Prostate gland (tissue), 2 donors: ENCODE measurements at regions of chr4 and their contacts with region 1.

Region 1: GRCh38 chr4:76515975-76516843 is 81.2 kb downstream of the SHROOM3 start:
- DNase-seq: no peak
- H3K4me3 ChIP-seq: no peak overlapping the region
- H3K27ac ChIP-seq: no peak overlapping the region
- H3K4me1 ChIP-seq: no peaks in the 10 kb centered on the region
- H3K27me3 ChIP-seq: no peaks in the 10 kb centered on the region
- CTCF ChIP-seq: no peak
- POLR2A ChIP-seq: no peak

Region 2: DNA sequence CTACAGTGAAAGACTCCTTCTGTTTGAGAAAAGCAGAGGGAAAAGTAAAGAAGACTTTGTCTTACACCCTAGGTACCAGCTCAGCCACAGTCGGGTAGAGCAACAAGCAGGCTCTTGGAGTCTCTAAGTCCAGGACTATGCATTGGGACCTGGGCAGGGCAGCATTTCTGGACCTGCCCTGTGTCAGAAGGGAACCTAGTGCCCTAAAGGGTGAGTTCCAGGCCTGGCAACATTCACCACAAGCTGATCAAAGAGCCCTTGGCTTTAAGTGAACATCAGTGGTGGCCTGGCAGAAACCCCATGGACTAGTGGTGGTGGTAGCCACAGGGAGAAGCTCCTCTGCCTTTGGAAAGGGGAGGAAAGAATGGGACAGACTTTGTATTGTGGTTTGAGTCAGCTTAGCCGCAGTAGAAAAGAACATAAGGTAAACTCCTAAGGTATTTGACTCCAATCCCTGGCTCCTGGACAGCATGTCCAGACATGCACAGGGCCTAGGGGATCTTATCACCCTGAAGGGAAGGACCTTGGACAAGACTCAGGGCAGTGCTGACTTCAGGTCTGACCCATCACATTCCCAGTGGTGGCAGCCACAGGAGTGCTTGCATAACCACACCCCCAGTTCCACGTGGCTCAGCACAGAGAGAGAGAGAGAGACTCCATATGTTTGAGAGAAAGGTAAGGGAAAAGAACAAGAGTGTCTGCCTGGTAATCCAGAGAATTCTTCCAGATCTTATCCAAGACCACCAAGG is 127.9 kb before region 1 on chr4:
- intact Hi-C with region 1: no loop called
- DNase-seq: no peak
- H3K4me3 ChIP-seq: no peak overlapping the region
- H3K27ac ChIP-seq: no peak overlapping the region
- H3K4me1 ChIP-seq: no peaks in the 10 kb centered on the region
- H3K27me3 ChIP-seq: no peaks in the 10 kb centered on the region
- CTCF ChIP-seq: no peak
- POLR2A ChIP-seq: no peak

Region 3: GRCh38 chr4:76624241-76624681 is 108.1 kb after region 1 on chr4:
- intact Hi-C with region 1: loop called (anchors 10 kb)
- DNase-seq: no peak
- H3K4me3 ChIP-seq: no peak overlapping the region
- H3K27ac ChIP-seq: peak overlapping the region in 1 of 2 donors; percentile 74
- H3K4me1 ChIP-seq: peaks cover 9% of the 10 kb centered on the region
- H3K27me3 ChIP-seq: no peaks in the 10 kb centered on the region
- CTCF ChIP-seq: no peak
- POLR2A ChIP-seq: no peak

Region 4: DNA sequence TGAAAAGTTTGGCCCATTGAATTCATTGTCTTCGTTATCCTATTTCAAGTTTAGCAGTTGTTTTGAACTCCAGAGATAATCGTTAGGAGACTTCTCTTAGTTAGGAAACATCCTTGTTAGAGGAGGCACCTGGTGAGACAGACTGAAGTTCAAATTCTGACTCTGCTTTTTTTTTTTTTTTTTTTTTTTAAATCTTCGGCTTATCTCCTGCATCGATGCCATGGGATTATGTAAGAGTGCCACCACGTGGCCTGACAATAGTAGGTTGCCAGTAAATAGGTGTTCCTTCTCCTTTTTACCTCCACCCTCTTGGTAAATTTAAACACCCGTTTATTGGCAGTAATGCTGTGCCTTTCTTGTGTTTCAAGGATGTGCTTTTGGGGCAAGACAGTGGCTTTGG is 232.4 kb after region 1 on chr4:
- intact Hi-C with region 1: loop called (anchors 2 kb)
- DNase-seq: peak; percentile 52
- H3K4me3 ChIP-seq: no peak overlapping the region
- H3K27ac ChIP-seq: peak overlapping the region in 1 of 2 donors; percentile 22
- H3K4me1 ChIP-seq: no peaks in the 10 kb centered on the region
- H3K27me3 ChIP-seq: no peaks in the 10 kb centered on the region
- CTCF ChIP-seq: peak in 3 of 4 experiments; percentile 18 to 46 (median 23)
- POLR2A ChIP-seq: no peak

Region 5: GRCh38 chr4:77044461-77045150 is 528.4 kb after region 1 on chr4:
- intact Hi-C with region 1: loop called (anchors 5 kb)
- DNase-seq: no peak
- H3K4me3 ChIP-seq: no peak overlapping the region
- H3K27ac ChIP-seq: no peak overlapping the region
- H3K4me1 ChIP-seq: no peaks in the 10 kb centered on the region
- H3K27me3 ChIP-seq: no peaks in the 10 kb centered on the region
- CTCF ChIP-seq: peak in 3 of 4 experiments; percentile 41 to 55 (median 54)
- POLR2A ChIP-seq: no peak